GM12878 (cell line): ENCODE measurements at regions of chr7 and their contacts with region 1.

Region 1: GRCh38 chr7:69775231-69775771 is 177.0 kb downstream of the AUTS2 start:
- DNase-seq: no peak
- ATAC-seq: no peak
- H3K4me3 ChIP-seq: no peak overlapping the region
- H3K27ac ChIP-seq: no peak overlapping the region
- H3K4me1 ChIP-seq: peaks cover 5% of the 10 kb centered on the region
- H3K27me3 ChIP-seq: no peaks in the 10 kb centered on the region
- CTCF ChIP-seq: no peak
- EP300 ChIP-seq: no peak
- POLR2A ChIP-seq: no peak
- RAD21 ChIP-seq: no peak

Region 2: GRCh38 chr7:69757981-69758430 is 17.3 kb before region 1 on chr7:
- CTCF ChIA-PET with region 1: interaction called, 4 read pairs
- POLR2A ChIA-PET with region 1: interaction called, 3 read pairs
- RAD21 ChIA-PET with region 1: interaction called, 10 read pairs
- SMC1A ChIA-PET with region 1: interaction called, 59 read pairs
- in situ Hi-C with region 1: no loop called
- intact Hi-C with region 1: no loop called
- DNase-seq: no peak
- ATAC-seq: peak; percentile 76
- H3K4me3 ChIP-seq: no peak overlapping the region
- H3K27ac ChIP-seq: no peak overlapping the region
- H3K4me1 ChIP-seq: peaks cover under 1% of the 10 kb centered on the region
- H3K27me3 ChIP-seq: no peaks in the 10 kb centered on the region
- CTCF ChIP-seq: no peak
- EP300 ChIP-seq: 0 out of 4 replicates have a peak, but pooled peaks of 1 of the 2 experiments have one; percentile 25
- POLR2A ChIP-seq: no peak
- RAD21 ChIP-seq: no peak

Region 3: DNA sequence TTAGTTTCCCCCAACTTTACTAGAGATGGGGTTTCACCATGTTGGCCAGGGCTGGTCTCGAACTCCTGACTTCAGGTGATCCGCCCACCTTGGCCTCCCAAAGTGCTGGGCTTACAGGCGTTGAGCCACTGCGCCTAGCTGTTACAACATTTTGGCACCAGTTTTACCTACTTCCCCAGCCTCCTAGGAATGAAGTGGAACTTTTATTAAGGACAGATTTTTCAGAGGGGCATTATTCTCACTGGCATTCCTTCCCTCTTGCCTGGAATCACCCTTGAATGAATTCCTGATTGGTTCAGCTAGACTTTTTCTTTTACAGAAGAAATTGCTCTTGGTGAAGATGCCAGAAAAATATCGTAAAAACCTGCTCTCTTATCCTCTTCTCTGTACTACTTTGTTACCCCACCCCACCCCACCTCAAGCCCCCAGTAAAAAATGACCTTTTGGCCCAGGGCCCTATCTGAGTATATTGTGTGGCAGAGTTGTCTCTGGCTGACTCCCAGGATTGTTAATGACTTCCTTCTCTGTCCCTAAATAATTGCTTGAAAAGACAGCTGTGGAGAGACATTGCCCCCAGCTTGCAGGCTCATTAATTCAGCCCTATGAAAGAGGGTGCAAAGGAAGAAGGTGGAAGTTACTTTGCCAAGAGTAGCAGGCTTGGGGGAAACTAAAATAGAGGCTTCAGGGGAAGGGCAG is 12.6 kb after region 1 on chr7:
- CTCF ChIA-PET with region 1: interaction called, 5 read pairs
- POLR2A ChIA-PET with region 1: interaction called, 3 read pairs
- RAD21 ChIA-PET with region 1: interaction called, 3 read pairs
- SMC1A ChIA-PET with region 1: interaction called, 42 read pairs
- in situ Hi-C with region 1: no loop called
- intact Hi-C with region 1: no loop called
- DNase-seq: no peak
- ATAC-seq: no peak
- H3K4me3 ChIP-seq: no peak overlapping the region
- H3K27ac ChIP-seq: no peak overlapping the region
- H3K4me1 ChIP-seq: peaks cover 11% of the 10 kb centered on the region; the same call in 1 of the 2 replicates
- H3K27me3 ChIP-seq: no peaks in the 10 kb centered on the region
- CTCF ChIP-seq: no peak
- EP300 ChIP-seq: no peak
- POLR2A ChIP-seq: no peak
- RAD21 ChIP-seq: no peak